ENCODE measurements at regions of chr2 and their contacts with region 1.

Region 1: GRCh38 chr2:70616168-70616694 is 62.6 kb upstream of the TGFA start:
- DNase-seq: peak; percentile 23 to 39
- ATAC-seq: peak; percentile 98

Region 2: GRCh38 chr2:70301344-70302194 is 314.7 kb before region 1 on chr2 and contains the start of gene FAM136A:
- intact Hi-C with region 1: loop called in 1 of 2 experiments (anchors 10 kb)
- DNase-seq: peak; percentile 84 to 88
- ATAC-seq: peak; percentile 92
- total RNA-seq, gene FAM136A: 37.4 to 55.5 TPM

Region 3: DNA sequence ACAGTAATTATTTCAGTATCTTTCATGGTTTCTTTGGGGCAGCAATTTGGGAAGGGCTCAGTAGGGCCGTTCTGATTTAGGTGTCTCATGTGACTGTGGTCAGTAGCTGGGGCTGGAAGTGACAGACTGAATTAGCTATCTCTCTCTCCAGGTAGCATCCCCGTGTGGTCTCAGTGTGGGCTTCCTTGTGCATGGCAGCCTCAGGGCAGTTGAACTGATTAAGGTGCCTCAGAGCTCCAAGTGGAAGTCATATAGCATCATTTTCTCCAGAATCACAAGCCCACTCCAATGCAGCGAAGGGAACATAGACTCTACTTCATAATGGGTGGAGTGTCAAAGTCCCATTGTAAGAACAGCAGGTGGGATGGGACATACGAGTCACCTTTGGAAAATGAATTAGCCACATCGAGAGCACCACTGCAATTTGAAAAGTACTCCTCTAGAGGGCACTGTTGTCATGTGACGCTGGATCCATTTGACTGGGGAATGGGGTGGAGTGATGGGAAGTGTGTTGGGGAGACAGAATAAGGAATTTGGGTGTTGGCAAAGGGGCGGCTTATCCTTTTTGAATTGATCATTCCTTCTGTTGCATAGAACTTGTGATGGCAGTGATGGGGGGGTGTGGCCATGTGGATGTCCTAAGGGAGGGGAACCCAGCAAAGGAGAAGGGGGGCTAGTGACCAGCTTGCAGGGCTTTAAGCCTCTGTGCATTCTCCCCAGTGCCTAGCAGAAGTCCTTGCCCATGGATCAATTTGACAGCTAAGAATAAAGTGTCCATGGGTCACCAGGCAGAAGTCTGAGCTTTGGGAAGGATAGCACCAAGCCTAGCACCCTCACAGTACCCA is 275.1 kb before region 1 on chr2:
- intact Hi-C with region 1: loop called in 1 of 2 experiments (anchors 5 kb)
- DNase-seq: peak in 1 of 2 donors; percentile 6
- ATAC-seq: peak; percentile 91

Region 4: GRCh38 chr2:70716131-70716743 is 100.0 kb after region 1 on chr2:
- intact Hi-C with region 1: no loop called
- DNase-seq: no peak
- ATAC-seq: no peak